ENCODE measurements at regions of chr6 and their contacts with region 1.

Region 1: GRCh38 chr6:71608646-71609045 is 277.7 kb upstream of the RIMS1 start:
- DNase-seq: peak in 1 of 2 experiments; percentile 72
- H3K4me3 ChIP-seq: no peak overlapping the region
- H3K27ac ChIP-seq: no peak overlapping the region
- H3K4me1 ChIP-seq: peaks cover 18% of the 10 kb centered on the region; the same call in 1 of the 2 replicates
- H3K27me3 ChIP-seq: no peaks in the 10 kb centered on the region
- CTCF ChIP-seq: no peak

Region 2: DNA sequence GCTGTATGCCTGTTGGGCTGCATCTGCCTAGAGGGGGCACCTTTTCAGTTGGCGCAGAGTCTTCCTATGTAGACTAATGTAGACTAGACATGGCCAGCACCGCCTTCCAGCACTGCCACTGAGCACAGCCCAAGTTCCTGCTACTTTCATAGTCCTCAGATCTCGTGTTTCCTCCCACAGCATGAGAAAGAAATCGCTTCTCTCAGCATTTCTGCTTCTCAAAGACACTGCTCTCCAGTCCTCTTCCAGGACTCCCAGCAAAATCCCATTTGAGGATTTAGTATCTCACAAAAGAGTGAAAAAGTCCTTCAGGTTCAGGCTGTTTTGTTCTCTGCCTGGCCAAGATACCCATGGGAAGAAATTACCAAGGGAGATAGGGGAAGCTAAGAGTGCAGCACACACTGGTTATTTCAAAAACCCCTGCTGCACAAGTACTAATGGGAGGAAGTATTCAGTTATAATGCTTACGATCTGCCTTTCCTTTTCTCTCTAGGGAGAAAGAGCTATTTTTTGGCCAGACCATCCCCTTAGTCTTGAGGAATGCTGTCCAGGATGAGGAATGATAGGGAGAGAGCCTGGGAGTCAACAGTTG is 284.4 kb before region 1 on chr6:
- CTCF ChIA-PET with region 1: no interaction called
- POLR2A ChIA-PET with region 1: no interaction called
- intact Hi-C with region 1: no loop called
- DNase-seq: no peak
- H3K4me3 ChIP-seq: no peak overlapping the region
- H3K27ac ChIP-seq: no peak overlapping the region
- H3K4me1 ChIP-seq: no peaks in the 10 kb centered on the region
- H3K27me3 ChIP-seq: no peaks in the 10 kb centered on the region
- CTCF ChIP-seq: no peak

Region 3: DNA sequence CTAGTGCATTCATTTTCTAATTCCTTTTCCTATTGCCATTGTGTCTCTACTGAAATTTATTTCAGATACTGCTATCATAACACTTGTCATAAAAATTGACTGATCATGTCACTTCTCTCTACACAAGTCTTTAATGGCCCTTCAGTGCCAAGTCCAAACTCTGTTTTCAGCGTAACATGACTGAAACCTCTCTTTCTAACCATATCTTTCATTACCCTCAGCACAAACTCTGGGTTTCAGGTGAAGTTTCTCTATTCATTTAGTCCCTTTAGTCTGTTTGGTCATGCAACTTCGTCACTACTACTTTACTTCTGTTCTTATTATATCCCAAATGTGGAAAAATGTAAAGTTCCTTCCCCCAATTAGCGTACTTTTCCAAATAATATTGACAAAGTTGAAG is 85.1 kb before region 1 on chr6:
- CTCF ChIA-PET with region 1: no interaction called
- POLR2A ChIA-PET with region 1: no interaction called
- intact Hi-C with region 1: no loop called
- DNase-seq: no peak
- H3K4me3 ChIP-seq: no peak overlapping the region
- H3K27ac ChIP-seq: no peak overlapping the region
- H3K4me1 ChIP-seq: 0 out of 2 replicates have a peak, but pooled peaks cover 5% of the 10 kb centered on the region
- H3K27me3 ChIP-seq: no peaks in the 10 kb centered on the region
- CTCF ChIP-seq: no peak

Region 4: GRCh38 chr6:71544028-71544427 is 64.6 kb before region 1 on chr6:
- CTCF ChIA-PET with region 1: no interaction called
- POLR2A ChIA-PET with region 1: no interaction called
- intact Hi-C with region 1: loop called (anchors 5 kb)
- DNase-seq: peak; percentile 33 to 76
- H3K4me3 ChIP-seq: no peak overlapping the region
- H3K27ac ChIP-seq: no peak overlapping the region
- H3K4me1 ChIP-seq: peaks cover 6% of the 10 kb centered on the region; the same call in 1 of the 2 replicates
- H3K27me3 ChIP-seq: no peaks in the 10 kb centered on the region
- CTCF ChIP-seq: no peak

Region 5: DNA sequence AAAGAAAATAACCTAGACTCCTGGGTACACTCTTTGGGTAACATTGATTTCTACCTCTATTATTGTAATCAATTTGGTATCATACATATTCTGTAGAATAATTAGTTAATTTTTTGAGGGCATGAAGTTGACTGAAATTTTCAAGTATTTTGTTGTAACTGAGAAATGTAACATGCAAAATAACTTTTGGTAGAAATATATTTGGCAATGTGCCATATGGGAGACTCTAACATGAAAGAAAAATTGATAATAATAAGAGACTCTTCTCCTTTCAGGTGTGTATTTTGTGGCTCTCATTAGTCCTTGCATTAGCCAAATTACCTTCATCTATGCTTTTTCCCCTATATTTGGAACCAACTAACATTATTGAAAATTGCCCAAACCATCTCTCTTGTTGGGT is 108.4 kb after region 1 on chr6:
- CTCF ChIA-PET with region 1: no interaction called
- POLR2A ChIA-PET with region 1: no interaction called
- intact Hi-C with region 1: no loop called
- DNase-seq: no peak
- H3K4me3 ChIP-seq: no peak overlapping the region
- H3K27ac ChIP-seq: no peak overlapping the region
- H3K4me1 ChIP-seq: no peaks in the 10 kb centered on the region
- H3K27me3 ChIP-seq: no peaks in the 10 kb centered on the region
- CTCF ChIP-seq: no peak

Region 6: DNA sequence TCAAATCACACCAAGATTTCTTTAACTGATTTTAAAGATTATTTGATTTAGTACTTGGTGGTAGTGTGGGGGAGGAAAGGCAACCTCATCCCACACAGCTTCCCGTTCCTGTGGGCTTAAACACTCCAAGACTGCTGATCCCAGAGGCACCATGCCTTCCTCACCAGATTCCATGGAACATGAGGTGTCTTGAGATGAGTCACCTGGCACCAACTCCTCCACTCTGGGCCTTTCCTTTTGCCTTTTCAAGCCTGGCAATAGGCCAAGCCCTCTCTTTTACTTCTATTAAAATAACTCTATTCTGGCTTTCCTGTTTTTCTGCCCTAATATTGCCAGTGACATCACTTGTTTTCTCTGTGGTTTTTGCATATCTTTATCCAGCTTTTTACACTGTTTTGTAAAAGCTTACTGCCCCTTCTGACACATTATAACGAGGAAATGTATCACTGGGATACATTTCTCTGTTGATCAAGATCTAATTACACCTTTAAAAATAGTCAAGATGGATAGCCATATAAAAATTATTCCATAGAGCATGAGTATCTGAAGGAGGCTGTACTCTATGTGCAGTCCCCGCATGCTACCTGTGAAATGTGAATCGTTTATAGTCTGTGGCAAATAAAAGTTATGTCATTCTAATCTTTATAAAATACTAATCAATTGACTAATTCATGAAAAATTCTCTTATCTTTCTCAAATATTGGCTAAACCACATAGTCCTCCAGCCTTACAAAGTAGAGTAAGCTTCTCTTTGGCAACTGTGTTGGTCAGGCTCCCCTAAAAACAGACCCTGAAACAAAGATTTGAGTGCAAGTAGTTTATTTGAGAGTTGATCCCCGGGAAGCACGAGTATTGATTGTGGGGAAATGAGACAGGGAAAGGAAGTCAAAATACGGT is 755.4 kb after region 1 on chr6:
- CTCF ChIA-PET with region 1: no interaction called
- POLR2A ChIA-PET with region 1: no interaction called
- intact Hi-C with region 1: no loop called
- DNase-seq: peak in 1 of 2 experiments; percentile 61
- H3K4me3 ChIP-seq: no peak overlapping the region
- H3K27ac ChIP-seq: no peak overlapping the region
- H3K4me1 ChIP-seq: no peaks in the 10 kb centered on the region; the same call in 1 of the 2 replicates
- H3K27me3 ChIP-seq: no peaks in the 10 kb centered on the region
- CTCF ChIP-seq: no peak

Measured in PC-9 (cell line).